Activated CD4-positive, alpha-beta memory T cell treated with anti-CD3 and anti-CD28 coated beads, Interleukin-2, amount 10 ng/mL, durations not matched to agents 7 days and 5 days (primary cell): ENCODE measurements at regions of chr18 and their contacts with region 1.

Region 1: GRCh38 chr18:12990967-12991838 is at the start of gene CEP192:
- DNase-seq: peak; percentile 99
- H3K4me3 Mint-ChIP-seq: peak within 1 kb of the TSS; percentile 98
- H3K27ac Mint-ChIP-seq: peak within 1 kb of the TSS; percentile 95
- H3K4me1 Mint-ChIP-seq: peaks cover 23% of the 10 kb centered on the region
- H3K27me3 Mint-ChIP-seq: no peaks in the 10 kb centered on the region
- total RNA-seq, gene CEP192: 42.6 to 46.1 TPM

Region 2: DNA sequence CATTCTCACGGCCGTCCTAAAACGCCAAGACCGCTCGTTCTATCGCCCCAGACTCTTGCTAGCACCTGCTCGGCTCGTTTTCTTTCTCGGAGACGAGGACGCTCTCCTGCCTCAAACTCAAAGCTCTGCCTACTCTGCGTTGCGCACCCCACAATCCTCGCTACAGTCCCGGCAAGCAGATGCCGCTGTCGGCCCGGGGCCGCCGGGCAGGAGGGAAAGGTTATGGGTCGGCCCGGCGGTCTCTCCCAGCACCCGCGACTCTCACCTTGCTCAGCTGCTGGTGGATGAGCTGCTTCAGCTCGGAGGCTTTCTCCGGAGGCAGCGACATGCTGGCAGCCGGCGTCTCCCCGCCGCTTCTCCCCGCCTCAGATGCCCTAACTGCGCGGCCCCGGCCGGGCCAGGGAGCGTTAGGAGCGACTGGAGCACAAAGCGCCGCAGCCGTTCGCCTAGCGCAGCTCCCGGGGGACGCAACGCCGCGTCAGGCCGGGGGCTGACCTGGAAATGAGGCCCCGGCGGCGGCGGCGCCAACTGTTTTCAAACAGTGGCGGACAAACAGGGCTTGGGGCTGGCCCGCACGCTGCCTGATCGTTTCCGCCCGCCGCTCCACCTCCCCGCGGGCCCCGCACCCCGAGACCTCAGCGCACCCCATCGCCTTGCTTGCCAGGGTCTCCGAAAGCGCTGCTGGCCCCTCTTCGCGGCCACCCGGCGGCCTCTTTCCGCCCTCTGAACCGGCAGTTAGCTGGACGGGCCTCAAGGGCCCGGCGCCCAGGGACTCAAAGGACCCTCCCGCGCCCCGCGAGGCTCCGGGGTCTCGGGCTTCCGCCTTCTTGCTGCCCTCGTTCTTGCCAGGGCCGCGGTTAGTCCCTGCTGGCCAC is 288.7 kb before region 1 on chr18 and contains the starts of genes CEP76 and PSMG2:
- CTCF ChIA-PET with region 1: no interaction called
- POLR2A ChIA-PET with region 1: interaction called, 27 read pairs
- DNase-seq: peak; percentile 85
- H3K4me3 Mint-ChIP-seq: peak within 1 kb of the TSS; percentile 94
- H3K27ac Mint-ChIP-seq: peak within 1 kb of the TSS; percentile 91
- H3K4me1 Mint-ChIP-seq: peaks cover 51% of the 10 kb centered on the region
- H3K27me3 Mint-ChIP-seq: no peaks in the 10 kb centered on the region
- total RNA-seq, gene CEP76: 14.8 TPM
- total RNA-seq, gene PSMG2: 115 to 118 TPM

Region 3: GRCh38 chr18:12947355-12948041 is 43.7 kb before region 1 on chr18 and contains the start of gene SEH1L:
- CTCF ChIA-PET with region 1: interaction called, 5 read pairs
- POLR2A ChIA-PET with region 1: interaction called, 68 read pairs
- DNase-seq: peak; percentile 99
- H3K4me3 Mint-ChIP-seq: peak within 1 kb of the TSS; percentile 96
- H3K27ac Mint-ChIP-seq: peak within 1 kb of the TSS; percentile 98
- H3K4me1 Mint-ChIP-seq: peaks cover 42% of the 10 kb centered on the region
- H3K27me3 Mint-ChIP-seq: no peaks in the 10 kb centered on the region
- total RNA-seq, gene SEH1L: 36.3 to 41.6 TPM

Region 4: GRCh38 chr18:12968619-12969018 is 22.6 kb before region 1 on chr18:
- CTCF ChIA-PET with region 1: no interaction called
- POLR2A ChIA-PET with region 1: interaction called, 15 read pairs
- DNase-seq: no peak
- H3K4me3 Mint-ChIP-seq: no peak overlapping the region
- H3K27ac Mint-ChIP-seq: no peak overlapping the region
- H3K4me1 Mint-ChIP-seq: peaks cover 21% of the 10 kb centered on the region
- H3K27me3 Mint-ChIP-seq: no peaks in the 10 kb centered on the region

Region 5: GRCh38 chr18:13003466-13003896 is 12.3 kb after region 1 on chr18:
- CTCF ChIA-PET with region 1: interaction called, 13 read pairs
- POLR2A ChIA-PET with region 1: interaction called, 31 read pairs
- DNase-seq: peak; percentile 26
- H3K4me3 Mint-ChIP-seq: no peak overlapping the region
- H3K27ac Mint-ChIP-seq: no peak overlapping the region
- H3K4me1 Mint-ChIP-seq: peaks cover 29% of the 10 kb centered on the region
- H3K27me3 Mint-ChIP-seq: no peaks in the 10 kb centered on the region